Panc1 (cell line): ENCODE measurements at regions of chr9 and their contacts with region 1.

Region 1: DNA sequence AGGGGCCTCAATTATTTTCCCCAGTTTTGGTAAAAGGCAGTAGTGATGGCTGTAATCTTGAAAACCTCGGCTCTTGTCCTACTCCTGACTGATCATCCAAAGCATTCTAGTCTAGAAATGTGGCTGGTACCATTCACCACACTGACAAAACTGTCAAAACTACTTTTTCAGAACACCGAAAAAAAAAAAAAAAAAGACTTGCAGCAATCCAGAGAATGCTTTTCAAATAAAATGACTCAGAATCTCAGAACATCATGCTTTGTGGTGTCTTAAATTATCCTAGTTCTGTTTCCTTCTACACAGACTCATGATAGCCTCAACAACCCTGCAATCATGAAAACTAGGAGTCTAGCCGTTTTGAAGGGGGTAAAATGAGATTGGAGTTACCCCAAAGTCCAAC is 13.4 kb downstream of the SLC28A3 start:
- DNase-seq: no peak
- ATAC-seq: no peak
- H3K4me3 ChIP-seq: no peak overlapping the region
- H3K27ac ChIP-seq: no peak overlapping the region
- H3K4me1 ChIP-seq: no peaks in the 10 kb centered on the region
- H3K27me3 ChIP-seq: no peaks in the 10 kb centered on the region
- CTCF ChIP-seq: no peak

Region 2: GRCh38 chr9:84381508-84381907 is 54.3 kb after region 1 on chr9:
- CTCF ChIA-PET with region 1: no interaction called
- POLR2A ChIA-PET with region 1: interaction called, 12 read pairs
- in situ Hi-C with region 1: no loop called
- intact Hi-C with region 1: no loop called
- DNase-seq: no peak
- ATAC-seq: no peak
- H3K4me3 ChIP-seq: no peak overlapping the region
- H3K27ac ChIP-seq: no peak overlapping the region
- H3K4me1 ChIP-seq: no peaks in the 10 kb centered on the region
- H3K27me3 ChIP-seq: no peaks in the 10 kb centered on the region
- CTCF ChIP-seq: no peak